ENCODE measurements at regions of chr11 and their contacts with region 1.

Region 1: GRCh38 chr11:842370-843002 is at the starts of genes POLR2L and TSPAN4:
- DNase-seq: peak; percentile 91
- H3K4me3 ChIP-seq: peak within 1 kb of the TSS; percentile 62 to 98 (median 83)
- H3K27ac ChIP-seq: peak within 1 kb of the TSS; percentile 88 to 94 (median 90)
- H3K4me1 ChIP-seq: peaks cover 21 to 77% (median 52%) of the 10 kb centered on the region in 4 donors
- H3K27me3 ChIP-seq: peaks cover 11% of the 10 kb centered on the region
- CTCF ChIP-seq: no peak
- EP300 ChIP-seq: no peak
- POLR2A ChIP-seq: peak; percentile 91
- total RNA-seq, gene POLR2L: 9.7 to 66.6 (median 32.7) TPM
- total RNA-seq, gene TSPAN4: 25.1 to 75.0 (median 32.4) TPM

Region 2: GRCh38 chr11:2761131-2762030 is 1918.9 kb after region 1 on chr11:
- in situ Hi-C with region 1: no loop called
- intact Hi-C with region 1: loop called (anchors 5 kb)
- DNase-seq: peak; percentile 36
- H3K4me3 ChIP-seq: no peak overlapping the region
- H3K27ac ChIP-seq: no peak overlapping the region
- H3K4me1 ChIP-seq: no peaks in the 10 kb centered on the region
- H3K27me3 ChIP-seq: no peaks in the 10 kb centered on the region
- CTCF ChIP-seq: no peak
- EP300 ChIP-seq: no peak
- POLR2A ChIP-seq: no peak

Measured in transverse colon (tissue), 4 donors.